ENCODE measurements at regions of chr19 and their contacts with region 1.

Region 1: GRCh38 chr19:46346821-46347571 is at the start of gene PPP5C:
- DNase-seq: peak; percentile 87
- ATAC-seq: peak; percentile 90
- H3K4me3 ChIP-seq: peak within 1 kb of the TSS; percentile 92 to 95 (median 94)
- H3K27ac ChIP-seq: peak within 1 kb of the TSS; percentile 78
- H3K4me1 ChIP-seq: peaks cover 66% of the 10 kb centered on the region
- H3K27me3 ChIP-seq: no peaks in the 10 kb centered on the region; a peak in 1 of 5 replicates
- CTCF ChIP-seq: peak; percentile 93
- EP300 ChIP-seq: no peak
- POLR2A ChIP-seq: peak; percentile 63 to 80
- RAD21 ChIP-seq: peak; percentile 63; the same call in 1 of the 2 replicates
- total RNA-seq, gene PPP5C: 38.2 and 41.6 TPM in 2 replicates

Region 2: GRCh38 chr19:46283771-46284170 is 63.2 kb before region 1 on chr19:
- CTCF ChIA-PET with region 1: interaction called, 4 read pairs
- POLR2A ChIA-PET with region 1: no interaction called
- in situ Hi-C with region 1: no loop called
- intact Hi-C with region 1: loop called (anchors 5 kb)
- DNase-seq: no peak
- ATAC-seq: no peak
- H3K4me3 ChIP-seq: no peak overlapping the region
- H3K27ac ChIP-seq: no peak overlapping the region
- H3K4me1 ChIP-seq: 0 out of 2 replicates have a peak, but pooled peaks cover under 1% of the 10 kb centered on the region
- H3K27me3 ChIP-seq: peaks cover 0 to 9% of the 10 kb centered on the region in 2 experiments; a peak in 2 of 5 replicates
- CTCF ChIP-seq: no peak
- EP300 ChIP-seq: no peak
- POLR2A ChIP-seq: no peak
- RAD21 ChIP-seq: no peak

Region 3: DNA sequence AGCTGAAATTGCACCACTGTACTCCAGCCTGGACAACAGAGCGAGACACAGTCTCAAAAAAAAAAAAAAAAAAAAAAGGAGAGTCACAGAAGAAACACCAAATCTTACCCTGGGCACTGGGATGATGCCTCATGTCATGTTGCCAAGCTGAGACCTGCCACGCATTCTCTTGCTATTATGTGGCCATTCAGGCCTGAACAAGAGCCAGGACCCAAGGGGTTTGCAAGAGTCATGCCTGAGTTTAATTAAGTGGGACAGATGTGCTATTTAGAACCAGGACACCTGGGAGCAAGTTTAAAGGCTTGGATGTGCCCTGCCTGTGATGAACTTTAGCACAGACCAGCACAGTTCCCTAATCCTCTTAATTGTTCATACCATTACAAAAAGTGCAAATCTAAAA is 114.5 kb after region 1 on chr19:
- CTCF ChIA-PET with region 1: no interaction called
- POLR2A ChIA-PET with region 1: no interaction called
- in situ Hi-C with region 1: no loop called
- intact Hi-C with region 1: no loop called
- DNase-seq: no peak
- ATAC-seq: no peak
- H3K4me3 ChIP-seq: no peak overlapping the region
- H3K27ac ChIP-seq: no peak overlapping the region
- H3K4me1 ChIP-seq: no peaks in the 10 kb centered on the region
- H3K27me3 ChIP-seq: no peaks in the 10 kb centered on the region; a peak in 1 of 5 replicates
- CTCF ChIP-seq: no peak
- EP300 ChIP-seq: no peak
- POLR2A ChIP-seq: no peak
- RAD21 ChIP-seq: no peak